CD8-positive, alpha-beta memory T cell (primary cell): ENCODE measurements at regions of chr6 and their contacts with region 1.

Region 1: DNA sequence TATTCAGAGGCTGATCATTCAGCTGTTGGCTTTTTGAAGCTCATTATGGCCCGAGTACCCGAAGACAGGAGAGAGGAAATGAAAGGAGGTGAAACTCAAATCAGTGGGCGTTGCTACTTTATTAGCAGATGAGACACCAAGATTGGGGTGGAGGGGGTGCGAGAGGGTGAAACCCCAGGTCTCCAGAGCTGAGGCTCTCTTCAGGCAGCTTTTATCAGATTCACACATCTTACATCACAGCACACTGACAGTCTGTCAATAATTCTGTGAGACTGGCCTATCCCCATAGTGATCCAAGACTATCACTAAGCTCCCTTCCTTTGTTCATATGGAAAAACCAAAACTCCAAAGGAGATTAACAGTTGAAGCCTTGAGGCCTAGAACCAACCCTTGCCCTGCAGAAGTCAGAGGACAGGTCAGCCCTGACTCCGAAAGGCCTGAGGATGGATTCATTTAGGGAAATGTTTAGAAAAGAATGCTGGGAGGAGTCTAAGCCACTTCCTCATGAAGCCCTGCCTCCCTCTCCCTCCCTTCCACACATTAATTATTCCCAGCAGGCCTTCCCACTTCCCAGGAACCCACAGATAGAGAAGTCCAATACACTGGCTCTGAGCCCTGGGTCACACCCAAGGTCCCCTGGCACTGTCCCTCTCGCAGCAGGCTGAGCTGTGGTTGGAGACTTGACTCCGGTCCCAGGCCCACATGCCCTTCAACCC is 23.2 kb downstream of the TRERF1 start:
- DNase-seq: peak in 4 of 5 donors; percentile 32 to 76 (median 47)
- H3K4me3 ChIP-seq: no peak overlapping the region
- H3K4me3 Mint-ChIP-seq: peak overlapping the region; percentile 44 to 85 (median 59)
- H3K27ac ChIP-seq: peak overlapping the region; percentile 4
- H3K27ac Mint-ChIP-seq: peak overlapping the region; percentile 55 to 97 (median 93)
- H3K4me1 ChIP-seq: peaks cover 45% of the 10 kb centered on the region
- H3K4me1 Mint-ChIP-seq: peaks cover 61 to 79% (median 78%) of the 10 kb centered on the region in 3 donors
- H3K27me3 ChIP-seq: no peaks in the 10 kb centered on the region
- H3K27me3 Mint-ChIP-seq: peaks cover 0 to under 1% of the 10 kb centered on the region in 2 donors

Region 2: GRCh38 chr6:42402184-42402583 is 26.3 kb before region 1 on chr6:
- CTCF ChIA-PET with region 1: interaction called, 19 read pairs
- POLR2A ChIA-PET with region 1: interaction called, 4 read pairs
- DNase-seq: peak in 4 of 5 donors; percentile 10 to 75 (median 23)
- H3K4me3 ChIP-seq: no peak overlapping the region
- H3K4me3 Mint-ChIP-seq: peak overlapping the region; percentile 22 to 89 (median 74)
- H3K27ac ChIP-seq: no peak overlapping the region
- H3K27ac Mint-ChIP-seq: peak overlapping the region; percentile 66 to 98 (median 90)
- H3K4me1 ChIP-seq: peaks cover 56% of the 10 kb centered on the region
- H3K4me1 Mint-ChIP-seq: peaks cover 79 to 99% (median 98%) of the 10 kb centered on the region in 3 donors
- H3K27me3 ChIP-seq: no peaks in the 10 kb centered on the region
- H3K27me3 Mint-ChIP-seq: no peaks in the 10 kb centered on the region

Region 3: DNA sequence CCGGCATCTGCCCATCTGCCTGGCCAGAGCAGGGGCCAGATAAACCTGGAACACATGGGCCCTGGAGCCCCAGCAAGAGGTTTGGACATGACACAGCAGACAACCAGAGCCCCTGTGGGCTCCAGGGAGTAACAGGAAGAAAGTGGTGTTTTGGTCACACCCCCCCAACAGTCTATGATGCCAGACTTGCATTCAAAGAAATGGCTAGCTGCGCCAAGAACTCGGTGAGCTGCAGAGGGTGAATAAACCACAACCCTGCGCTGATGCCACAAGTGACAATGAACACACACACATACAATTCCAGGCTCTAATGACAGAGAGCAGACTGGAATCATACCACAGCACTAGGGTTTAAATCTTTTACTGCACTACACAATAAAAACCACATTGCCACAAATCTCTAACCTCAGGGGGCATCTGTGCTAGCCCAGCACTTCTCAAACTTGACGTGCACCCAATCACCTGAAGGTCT is 10.8 kb before region 1 on chr6:
- CTCF ChIA-PET with region 1: interaction called, 11 read pairs
- POLR2A ChIA-PET with region 1: interaction called, 3 read pairs
- DNase-seq: peak; percentile 32 to 82 (median 59)
- H3K4me3 ChIP-seq: no peak overlapping the region
- H3K4me3 Mint-ChIP-seq: peak overlapping the region; percentile 12 to 80 (median 75)
- H3K27ac ChIP-seq: no peak overlapping the region
- H3K27ac Mint-ChIP-seq: peak overlapping the region; percentile 51 to 97 (median 86)
- H3K4me1 ChIP-seq: peaks cover 26% of the 10 kb centered on the region
- H3K4me1 Mint-ChIP-seq: peaks cover 60 to 91% (median 83%) of the 10 kb centered on the region in 3 donors
- H3K27me3 ChIP-seq: no peaks in the 10 kb centered on the region
- H3K27me3 Mint-ChIP-seq: peaks cover 0 to 1% of the 10 kb centered on the region in 2 donors

Region 4: DNA sequence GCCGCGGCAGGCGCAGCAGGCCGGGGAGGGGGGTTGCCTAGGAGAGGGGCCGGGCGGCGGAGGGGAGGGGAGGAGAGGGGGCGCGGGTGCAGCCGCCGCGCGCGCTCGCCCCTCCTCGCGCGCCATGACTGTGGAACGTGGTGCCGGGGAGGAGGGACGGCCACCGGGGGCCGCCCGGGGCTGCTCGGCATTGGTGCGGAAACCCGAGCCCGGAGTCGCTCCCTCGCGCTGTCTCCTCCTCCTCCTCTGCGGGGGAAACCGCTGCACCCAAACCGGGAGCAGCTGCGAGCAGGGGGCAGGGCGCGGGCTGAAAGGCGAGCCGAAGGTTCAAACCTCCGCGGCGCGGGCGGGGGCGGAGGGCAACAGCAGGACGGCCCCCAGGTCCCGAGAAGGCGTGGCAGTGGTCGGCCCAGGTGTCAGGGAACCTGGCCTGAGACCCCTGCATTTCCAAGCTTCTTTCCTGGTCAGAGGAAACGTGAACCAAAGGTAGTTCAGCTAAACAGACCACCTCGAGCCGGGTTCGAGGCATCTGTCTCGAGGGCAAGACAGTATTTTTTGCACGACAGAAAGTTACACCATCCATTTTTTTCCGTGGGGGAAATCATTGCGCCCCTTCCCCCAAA is 24.7 kb after region 1 on chr6:
- CTCF ChIA-PET with region 1: interaction called, 9 read pairs
- POLR2A ChIA-PET with region 1: interaction called, 14 read pairs
- DNase-seq: peak; percentile 64 to 85 (median 76)
- H3K4me3 ChIP-seq: peak overlapping the region; percentile 92
- H3K4me3 Mint-ChIP-seq: peak overlapping the region; percentile 86 to 100 (median 93)
- H3K27ac ChIP-seq: no peak overlapping the region
- H3K27ac Mint-ChIP-seq: peak overlapping the region in 2 of 8 donors; percentile 12 to 89
- H3K4me1 ChIP-seq: peaks cover 12% of the 10 kb centered on the region
- H3K4me1 Mint-ChIP-seq: peaks cover 31 to 42% (median 33%) of the 10 kb centered on the region in 3 donors
- H3K27me3 ChIP-seq: no peaks in the 10 kb centered on the region
- H3K27me3 Mint-ChIP-seq: no peaks in the 10 kb centered on the region

Region 5: GRCh38 chr6:42555477-42556457 is 127.3 kb after region 1 on chr6:
- CTCF ChIA-PET with region 1: no interaction called
- POLR2A ChIA-PET with region 1: no interaction called
- DNase-seq: peak in 1 of 5 donors; percentile 25
- H3K4me3 ChIP-seq: no peak overlapping the region
- H3K4me3 Mint-ChIP-seq: peak overlapping the region in 1 of 7 donors; percentile 59
- H3K27ac ChIP-seq: no peak overlapping the region
- H3K27ac Mint-ChIP-seq: peak overlapping the region in 2 of 8 donors; percentile 65 to 82
- H3K4me1 ChIP-seq: no peaks in the 10 kb centered on the region
- H3K4me1 Mint-ChIP-seq: peaks cover 6 to 19% (median 10%) of the 10 kb centered on the region in 3 donors
- H3K27me3 ChIP-seq: no peaks in the 10 kb centered on the region
- H3K27me3 Mint-ChIP-seq: peaks cover 0 to 2% of the 10 kb centered on the region in 2 donors

Region 6: GRCh38 chr6:44078795-44079671 is 1650.5 kb after region 1 on chr6:
- CTCF ChIA-PET with region 1: no interaction called
- POLR2A ChIA-PET with region 1: no interaction called
- DNase-seq: peak; percentile 44 to 72 (median 61)
- H3K4me3 ChIP-seq: no peak overlapping the region
- H3K4me3 Mint-ChIP-seq: no peak overlapping the region
- H3K27ac ChIP-seq: peak overlapping the region; percentile 75
- H3K27ac Mint-ChIP-seq: peak overlapping the region in 1 of 8 donors; percentile 48
- H3K4me1 ChIP-seq: peaks cover 8% of the 10 kb centered on the region
- H3K4me1 Mint-ChIP-seq: peaks cover 6 to 8% (median 8%) of the 10 kb centered on the region in 3 donors
- H3K27me3 ChIP-seq: no peaks in the 10 kb centered on the region
- H3K27me3 Mint-ChIP-seq: peaks cover 3 to 15% of the 10 kb centered on the region in 2 donors